ENCODE measurements at regions of chr15 and their contacts with region 1.

Region 1: GRCh38 chr15:28975766-28976179 is 90.0 kb downstream of the APBA2 start:
- DNase-seq: peak; percentile 76
- H3K27ac ChIP-seq: no peak overlapping the region
- CTCF ChIP-seq: peak; percentile 68

Region 2: DNA sequence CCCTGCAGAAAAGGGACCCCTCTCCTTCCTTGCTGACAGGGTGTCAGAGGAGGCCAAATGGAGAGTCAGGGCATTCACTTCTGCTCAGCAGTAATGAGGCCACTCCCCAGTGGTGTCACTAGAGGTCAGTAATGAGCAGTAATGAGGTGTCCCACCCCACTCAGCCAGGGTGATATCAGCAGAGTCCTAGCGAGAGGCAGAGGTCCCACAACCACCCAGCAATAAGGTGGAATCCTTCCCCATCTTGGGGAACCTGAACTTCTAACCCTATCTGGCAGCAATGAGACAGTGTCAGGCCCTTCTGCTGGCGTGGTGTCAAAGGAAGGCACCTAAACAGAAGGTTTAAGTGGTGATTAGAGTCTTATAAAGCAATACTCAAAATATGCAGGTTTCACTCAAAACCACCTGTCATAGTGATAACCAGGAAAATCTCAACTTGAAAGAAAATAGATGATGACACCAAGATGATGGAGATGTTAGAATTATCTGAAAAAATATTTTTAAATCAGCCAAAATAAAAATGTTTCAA is 889.5 kb before region 1 on chr15:
- CTCF ChIA-PET with region 1: no interaction called
- POLR2A ChIA-PET with region 1: no interaction called
- DNase-seq: peak; percentile 67
- H3K27ac ChIP-seq: no peak overlapping the region
- CTCF ChIP-seq: peak; percentile 85

Region 3: DNA sequence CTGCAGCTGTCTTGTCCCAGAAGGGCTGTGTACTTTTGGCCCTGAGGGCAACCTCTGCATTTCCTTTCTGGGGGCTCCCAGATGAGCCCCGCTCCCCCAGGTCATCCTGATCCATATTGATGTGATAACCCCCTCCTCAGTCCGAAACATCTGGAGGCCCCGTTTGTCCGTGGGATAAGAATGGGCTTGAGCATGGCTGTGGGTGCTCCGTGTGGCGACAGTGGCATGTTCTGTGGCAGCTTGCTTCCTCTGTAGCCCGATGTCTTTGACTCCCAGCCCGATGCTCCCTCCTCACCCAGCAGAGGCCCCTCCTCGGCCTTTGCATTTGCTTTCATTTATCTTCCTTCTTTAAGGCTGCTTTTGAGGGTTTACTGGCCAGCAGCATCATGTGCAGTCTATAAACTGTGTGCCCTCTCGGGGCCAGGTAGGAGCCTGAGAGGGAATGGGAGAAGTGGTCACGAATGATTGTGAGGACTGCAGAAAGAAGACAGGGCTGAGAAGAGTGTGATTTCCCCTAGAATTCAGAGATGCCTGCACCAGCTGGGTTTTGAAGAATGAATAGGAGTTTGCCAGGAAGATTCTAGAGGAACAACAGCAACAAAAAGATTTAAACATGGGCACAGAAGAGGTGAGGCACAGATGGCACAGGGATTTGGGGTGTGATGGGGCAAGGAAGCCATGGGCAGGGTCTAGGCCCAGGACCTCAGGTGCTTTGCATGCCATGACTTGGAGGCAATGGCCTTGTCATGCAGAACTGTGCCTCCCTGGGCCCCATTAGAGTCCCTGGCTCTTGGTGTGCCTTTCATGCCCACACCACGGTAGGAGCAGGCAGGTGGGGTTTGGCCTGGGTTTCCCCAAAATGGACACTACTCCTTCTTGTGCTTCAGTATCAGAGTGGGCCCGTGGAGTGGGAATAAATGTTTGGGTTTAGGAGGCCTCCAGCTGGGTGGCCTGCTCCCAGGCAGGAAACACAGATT is 55.8 kb before region 1 on chr15:
- CTCF ChIA-PET with region 1: interaction called, 10 read pairs
- POLR2A ChIA-PET with region 1: no interaction called
- DNase-seq: no peak
- H3K27ac ChIP-seq: no peak overlapping the region
- CTCF ChIP-seq: no peak